ENCODE measurements at regions of chr21 and their contacts with region 1.

Region 1: DNA sequence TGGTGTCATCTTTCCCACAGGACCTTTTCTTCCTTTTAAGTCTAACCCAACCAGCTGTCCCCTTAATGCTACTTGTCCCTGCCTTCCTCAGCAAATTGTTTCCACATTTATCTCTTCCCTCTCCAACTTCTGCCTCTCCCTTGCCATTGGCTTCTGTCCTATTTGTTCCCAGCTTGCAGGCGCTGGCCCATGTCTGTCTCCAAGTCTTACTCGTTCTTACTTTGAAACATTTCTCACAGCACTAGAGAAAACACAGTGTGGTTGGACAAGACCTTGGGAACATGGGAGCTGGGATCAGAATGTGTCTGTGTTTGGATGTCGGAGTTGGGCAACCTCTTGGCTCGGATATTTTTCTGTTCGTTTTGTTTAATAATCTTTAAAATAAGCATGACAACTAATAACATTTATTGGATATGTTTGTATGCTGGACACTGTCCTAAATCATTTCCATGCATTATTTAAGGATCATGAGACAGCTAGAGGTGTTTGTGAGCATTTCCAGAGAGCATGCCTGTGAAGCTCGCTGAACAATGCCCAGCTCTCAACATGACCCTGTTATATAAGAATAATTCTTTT is 5.8 kb upstream of the BRWD1 start:
- DNase-seq: peak; percentile 34
- H3K4me3 ChIP-seq: no peak overlapping the region
- H3K27ac ChIP-seq: peak overlapping the region; percentile 53
- H3K27me3 ChIP-seq: no peaks in the 10 kb centered on the region
- CTCF ChIP-seq: no peak

Region 2: DNA sequence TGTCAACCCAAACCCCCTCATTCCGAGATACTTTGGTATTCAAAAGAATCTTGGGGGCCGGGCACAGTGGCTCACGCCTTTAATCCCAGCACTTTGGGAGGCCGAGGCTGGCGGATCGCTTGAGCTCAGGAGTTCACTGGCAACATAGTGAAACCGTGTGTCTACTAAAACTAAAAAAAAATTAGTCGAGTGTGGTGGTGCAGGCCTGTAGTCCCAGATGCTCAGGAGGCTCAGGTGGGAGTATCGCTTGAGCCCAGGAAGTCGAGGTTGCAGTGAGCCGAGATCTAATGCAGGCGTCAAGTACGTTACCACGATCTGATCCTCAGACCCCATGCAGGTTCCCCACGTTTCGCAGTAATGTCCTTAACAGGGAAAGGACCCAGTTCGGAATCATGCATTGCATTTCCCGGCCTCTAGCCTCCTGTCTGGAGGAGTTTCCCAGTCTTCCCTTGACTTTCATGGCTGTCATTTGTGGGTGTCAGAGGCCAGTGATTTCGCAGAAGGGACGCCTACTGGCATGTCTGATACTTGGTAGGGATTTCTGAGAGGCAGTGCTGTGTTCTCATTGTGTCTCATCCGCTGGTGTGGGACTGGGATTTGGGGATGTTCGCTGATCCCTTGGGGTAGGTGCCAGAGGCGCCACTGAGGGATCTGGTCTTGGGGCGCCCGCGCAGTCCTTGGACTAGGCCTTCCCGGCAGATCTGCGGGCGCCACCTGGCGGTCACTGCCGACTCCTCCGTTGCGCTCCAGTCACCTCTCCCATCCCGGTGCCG is 69.0 kb after region 1 on chr21:
- CTCF ChIA-PET with region 1: interaction called, 3 read pairs
- POLR2A ChIA-PET with region 1: interaction called, 11 read pairs
- DNase-seq: no peak
- H3K4me3 ChIP-seq: peak overlapping the region; percentile 63
- H3K27ac ChIP-seq: peak overlapping the region; percentile 65
- H3K27me3 ChIP-seq: no peaks in the 10 kb centered on the region
- CTCF ChIP-seq: peak; percentile 86

Region 3: DNA sequence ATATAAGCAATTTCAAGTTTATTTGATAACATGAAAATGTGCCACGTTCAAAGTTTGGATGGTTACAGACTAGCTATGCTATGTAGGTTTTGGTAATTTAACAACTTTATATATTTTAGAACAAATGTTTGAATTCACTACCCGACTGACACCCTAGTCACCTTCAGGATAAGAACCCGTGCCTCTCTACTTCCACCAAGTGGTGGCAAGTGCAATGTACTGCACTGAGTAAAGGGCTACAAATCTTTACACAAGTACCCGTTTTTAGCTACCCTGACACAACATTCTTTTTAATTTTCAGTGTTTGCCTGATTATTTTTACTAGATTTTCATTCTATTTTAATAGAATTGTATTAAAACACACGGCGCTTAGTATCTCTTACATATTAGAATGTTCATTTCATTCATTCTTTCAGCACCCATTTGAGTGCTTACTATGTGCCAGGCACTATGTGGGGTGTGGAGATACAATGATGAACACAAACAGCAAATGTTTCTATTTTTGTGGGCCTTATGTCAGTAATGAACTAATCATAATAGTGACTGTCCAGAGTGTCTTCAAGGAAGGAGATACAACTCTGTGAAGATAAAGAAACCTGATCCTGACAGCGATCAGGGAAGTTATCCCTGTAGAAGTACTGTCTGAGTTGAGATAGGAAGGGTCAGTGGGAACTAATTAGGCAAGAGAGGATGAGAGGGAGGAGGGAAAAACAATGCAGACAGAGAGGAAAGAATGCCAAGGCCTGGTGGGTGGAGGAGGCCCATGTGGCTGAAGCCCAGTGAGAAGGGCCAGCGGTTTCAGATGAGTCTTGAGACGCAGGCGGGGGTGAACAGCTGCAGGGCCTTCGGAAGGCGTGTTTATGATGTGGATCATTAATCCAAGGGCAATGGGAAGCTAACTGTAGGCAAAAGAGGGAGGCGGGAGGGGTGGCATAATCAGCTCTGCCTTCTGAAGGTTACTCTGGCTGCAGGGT is 122.5 kb after region 1 on chr21:
- CTCF ChIA-PET with region 1: interaction called, 12 read pairs
- POLR2A ChIA-PET with region 1: no interaction called
- DNase-seq: no peak
- H3K4me3 ChIP-seq: no peak overlapping the region
- H3K27ac ChIP-seq: no peak overlapping the region
- H3K27me3 ChIP-seq: no peaks in the 10 kb centered on the region
- CTCF ChIP-seq: peak; percentile 86

Measured in AG04450 (cell line).